ENCODE measurements at regions of chr6 and their contacts with region 1.

Region 1: DNA sequence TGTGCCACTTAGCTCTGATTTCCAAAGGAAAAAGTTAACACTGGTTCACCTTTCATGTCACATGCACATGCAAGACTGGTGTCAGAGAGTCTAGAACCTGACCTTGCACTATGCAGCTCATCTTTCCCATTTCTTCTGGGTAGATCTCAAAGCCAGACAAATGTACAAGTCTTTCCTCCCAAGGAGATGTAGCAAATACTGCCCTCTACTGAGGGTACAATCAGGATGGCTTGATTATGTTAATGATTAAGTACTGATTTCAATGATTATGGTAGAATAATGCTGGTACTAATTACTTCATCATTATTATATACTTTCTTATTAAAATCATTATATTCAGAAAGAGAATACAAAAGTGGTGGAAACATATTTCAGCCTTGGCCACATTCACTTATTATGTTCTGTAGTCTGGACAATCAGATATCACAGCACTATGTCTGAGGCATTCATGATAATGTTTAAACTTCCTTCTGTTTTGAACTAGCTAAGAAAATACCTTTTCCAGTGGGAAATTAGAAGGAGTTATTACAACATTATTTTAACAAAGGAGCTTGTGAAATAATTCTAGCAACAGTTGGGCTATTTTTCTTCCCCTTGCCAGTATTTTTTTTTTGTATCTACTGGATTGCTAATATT is 68.5 kb upstream of the FOXO3 start:
- DNase-seq: no peak
- ATAC-seq: peak; percentile 64
- H3K4me3 ChIP-seq: no peak overlapping the region
- H3K27ac ChIP-seq: no peak overlapping the region
- H3K4me1 ChIP-seq: no peaks in the 10 kb centered on the region
- H3K27me3 ChIP-seq: no peaks in the 10 kb centered on the region
- CTCF ChIP-seq: peak; percentile 45 to 72 (median 56); a peak in 5 of 6 replicates
- EP300 ChIP-seq: no peak
- POLR2A ChIP-seq: no peak
- RAD21 ChIP-seq: peak; percentile 77

Region 2: DNA sequence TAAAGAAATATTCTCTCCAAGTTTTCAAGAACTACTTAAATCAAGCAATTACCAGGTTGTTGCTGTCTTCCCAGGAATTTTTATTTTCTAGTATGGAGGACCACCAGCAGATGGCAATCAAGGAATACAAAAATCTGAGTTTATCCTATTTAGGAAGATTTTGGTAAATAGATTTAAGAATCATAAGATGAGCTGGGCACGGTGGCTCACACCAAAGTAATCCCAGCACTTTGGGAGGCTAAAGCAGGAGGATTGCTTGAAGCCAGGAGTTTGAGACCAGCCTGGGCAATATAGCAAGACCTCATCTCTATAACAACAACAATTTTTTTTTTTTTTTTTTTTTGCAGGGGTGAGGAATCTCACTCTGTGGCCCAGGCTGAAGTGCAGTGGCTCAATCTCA is 515.0 kb before region 1 on chr6:
- CTCF ChIA-PET with region 1: interaction called, 22 read pairs
- POLR2A ChIA-PET with region 1: no interaction called
- RAD21 ChIA-PET with region 1: interaction called, 3 read pairs
- SMC1A ChIA-PET with region 1: interaction called, 6 read pairs
- in situ Hi-C with region 1: no loop called
- intact Hi-C with region 1: no loop called
- DNase-seq: no peak
- ATAC-seq: no peak
- H3K4me3 ChIP-seq: no peak overlapping the region
- H3K27ac ChIP-seq: no peak overlapping the region
- H3K4me1 ChIP-seq: no peaks in the 10 kb centered on the region
- H3K27me3 ChIP-seq: no peaks in the 10 kb centered on the region; a peak in 1 of 4 replicates
- CTCF ChIP-seq: peak in 1 of 3 experiments; percentile 38; a peak in 2 of 6 replicates
- EP300 ChIP-seq: no peak
- POLR2A ChIP-seq: no peak
- RAD21 ChIP-seq: peak; percentile 35

Region 3: DNA sequence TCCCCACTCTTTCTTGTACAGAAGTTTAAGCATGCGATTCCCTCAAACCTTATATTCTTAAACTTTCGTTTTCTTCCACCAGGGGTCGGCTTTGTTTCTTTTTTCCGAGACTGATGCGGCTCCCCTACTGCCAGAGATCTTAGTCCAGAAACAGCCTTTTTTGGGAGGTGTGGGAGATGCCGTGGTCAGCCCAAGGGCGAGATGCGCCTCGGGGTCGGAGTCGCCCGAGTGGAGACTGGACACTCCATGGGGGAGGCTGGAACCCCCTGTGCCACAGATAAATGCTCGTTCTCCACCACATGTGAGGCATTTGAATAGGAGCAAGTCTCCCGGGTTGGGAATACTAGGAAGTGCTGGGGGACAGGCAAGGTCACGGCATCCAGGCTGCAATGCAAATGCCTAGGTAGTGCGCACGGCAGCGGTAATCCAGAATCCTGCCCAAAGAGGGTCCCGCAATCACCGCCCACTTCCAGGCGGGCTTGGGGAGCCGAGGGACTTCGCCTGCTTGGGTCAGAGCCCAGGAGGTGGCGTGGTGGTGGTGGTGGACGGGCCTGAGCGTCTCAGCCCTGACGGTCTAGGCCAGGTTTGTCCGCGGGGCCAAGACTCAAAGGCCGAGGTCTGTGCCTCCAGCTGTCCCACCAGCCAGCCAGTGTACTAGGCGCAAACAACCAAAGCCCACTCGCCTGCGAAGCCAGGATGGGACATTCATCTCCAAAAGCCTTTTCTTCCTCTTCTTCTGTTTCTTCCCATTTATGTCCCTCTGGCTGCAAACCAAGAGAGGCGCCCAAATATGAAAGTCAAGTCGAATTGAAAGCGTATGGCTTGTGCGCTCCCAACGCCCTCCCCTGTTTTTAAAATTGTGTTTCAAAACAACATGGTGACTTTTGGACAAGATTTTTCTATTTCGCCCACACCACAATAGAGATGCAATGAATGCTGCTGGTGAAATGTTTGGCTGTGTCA is 378.4 kb before region 1 on chr6:
- CTCF ChIA-PET with region 1: interaction called, 33 read pairs
- POLR2A ChIA-PET with region 1: no interaction called
- RAD21 ChIA-PET with region 1: interaction called, 11 read pairs
- SMC1A ChIA-PET with region 1: interaction called, 6 read pairs
- in situ Hi-C with region 1: loop called (anchors 5 kb)
- intact Hi-C with region 1: loop called (anchors 1 kb)
- DNase-seq: no peak
- ATAC-seq: peak; percentile 13; the same call in 1 of the 3 replicates
- H3K4me3 ChIP-seq: no peak overlapping the region
- H3K27ac ChIP-seq: no peak overlapping the region
- H3K4me1 ChIP-seq: peaks cover 4% of the 10 kb centered on the region; the same call in 1 of the 2 replicates
- H3K27me3 ChIP-seq: peaks cover 18 to 44% of the 10 kb centered on the region in 2 experiments
- CTCF ChIP-seq: peak; percentile 8 to 53 (median 20); a peak in 3 of 6 replicates
- EP300 ChIP-seq: no peak
- POLR2A ChIP-seq: no peak
- RAD21 ChIP-seq: peak; percentile 78

Region 4: GRCh38 chr6:108250240-108250866 is 241.9 kb before region 1 on chr6:
- CTCF ChIA-PET with region 1: interaction called, 76 read pairs
- POLR2A ChIA-PET with region 1: no interaction called
- RAD21 ChIA-PET with region 1: interaction called, 28 read pairs
- SMC1A ChIA-PET with region 1: interaction called, 28 read pairs
- in situ Hi-C with region 1: loop called (anchors 5 kb)
- intact Hi-C with region 1: loop called (anchors 5 kb)
- DNase-seq: no peak
- ATAC-seq: peak; percentile 91
- H3K4me3 ChIP-seq: no peak overlapping the region
- H3K27ac ChIP-seq: no peak overlapping the region
- H3K4me1 ChIP-seq: no peaks in the 10 kb centered on the region
- H3K27me3 ChIP-seq: no peaks in the 10 kb centered on the region
- CTCF ChIP-seq: peak; percentile 34 to 56 (median 54); a peak in 5 of 6 replicates
- EP300 ChIP-seq: no peak
- POLR2A ChIP-seq: no peak
- RAD21 ChIP-seq: peak; percentile 48

Region 5: DNA sequence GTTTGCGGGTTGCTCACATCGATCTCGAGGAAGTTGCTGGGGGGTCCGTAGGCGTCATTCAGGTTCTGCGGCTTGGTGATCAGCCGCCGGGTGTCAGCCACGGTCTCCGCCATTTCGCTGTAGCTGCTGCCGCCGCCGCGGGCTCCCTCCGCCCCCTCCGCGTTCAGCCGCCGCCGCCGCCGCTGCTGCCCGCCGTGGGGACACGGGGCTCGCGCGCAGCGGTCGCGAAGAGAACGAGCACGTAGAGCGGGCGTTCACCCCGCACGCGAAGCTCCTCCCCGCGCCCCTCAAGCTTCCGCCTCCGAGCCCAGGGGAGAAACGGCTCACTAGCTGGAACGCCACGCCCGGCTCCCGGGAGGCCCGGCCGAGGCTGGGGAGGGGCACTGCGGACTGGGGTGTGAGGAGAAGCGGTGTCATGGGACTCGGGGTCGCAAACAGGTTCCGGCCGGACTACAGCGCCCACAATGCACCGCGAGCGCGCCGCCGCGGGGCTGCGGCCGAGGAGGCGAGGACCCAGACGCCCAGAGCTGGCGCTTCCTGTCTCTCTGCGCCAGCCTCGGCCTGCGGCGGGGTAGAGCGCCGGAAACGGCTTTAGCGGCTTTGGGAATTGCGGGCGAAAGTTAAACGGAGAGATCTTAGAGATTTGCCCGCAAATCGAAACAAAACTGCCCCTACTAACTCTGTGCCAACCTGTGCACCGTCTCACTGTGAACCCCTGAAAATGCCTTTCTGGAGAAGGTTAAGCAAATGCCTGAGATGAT is 231.3 kb before region 1 on chr6 and contains the start of gene SNX3:
- CTCF ChIA-PET with region 1: interaction called, 76 read pairs
- POLR2A ChIA-PET with region 1: interaction called, 3 read pairs
- RAD21 ChIA-PET with region 1: interaction called, 7 read pairs
- SMC1A ChIA-PET with region 1: interaction called, 9 read pairs
- in situ Hi-C with region 1: no loop called
- intact Hi-C with region 1: no loop called
- DNase-seq: peak; percentile 91
- ATAC-seq: peak; percentile 93
- H3K4me3 ChIP-seq: peak within 1 kb of the TSS; percentile 94
- H3K27ac ChIP-seq: peak within 1 kb of the TSS; percentile 99
- H3K4me1 ChIP-seq: peaks cover 8% of the 10 kb centered on the region
- H3K27me3 ChIP-seq: no peaks in the 10 kb centered on the region
- CTCF ChIP-seq: 0 out of 6 replicates have a peak, but pooled peaks of 1 of the 3 experiments have one; percentile 11
- EP300 ChIP-seq: peak in 1 of 2 experiments; percentile 38; a peak in 1 of 4 replicates
- POLR2A ChIP-seq: peak; percentile 88
- RAD21 ChIP-seq: 0 out of 2 replicates have a peak, but pooled peaks have one; percentile 5
- polyA plus RNA-seq, gene SNX3: 43.7 to 78.6 TPM

Region 6: DNA sequence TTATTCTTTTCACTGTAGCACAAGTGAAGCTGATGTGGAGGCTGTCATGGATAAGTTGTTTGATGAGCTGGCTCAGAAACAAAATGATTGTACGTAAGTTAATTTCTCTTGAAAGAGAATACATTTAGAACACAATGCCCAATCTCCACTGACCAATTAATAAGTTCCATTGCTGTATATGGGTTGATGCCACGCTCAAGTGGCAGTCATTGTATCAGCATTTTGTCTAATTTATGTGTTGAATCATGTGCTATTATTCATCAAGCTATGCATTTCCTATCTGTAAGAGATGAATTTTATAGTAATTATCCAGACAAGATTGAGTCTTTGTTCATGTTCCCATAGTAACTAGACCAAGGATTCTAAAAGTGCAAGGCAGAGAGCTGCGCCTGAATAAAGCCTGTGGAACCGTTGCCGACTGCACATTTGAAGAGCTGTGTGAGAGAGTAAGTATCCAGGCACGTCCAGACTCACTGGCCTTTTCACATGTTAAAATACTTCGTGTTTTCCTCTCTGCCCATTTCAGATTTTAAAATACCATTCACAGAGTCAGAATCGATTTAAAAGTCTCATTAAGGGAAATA is 15.3 kb before region 1 on chr6:
- CTCF ChIA-PET with region 1: interaction called, 16 read pairs
- POLR2A ChIA-PET with region 1: no interaction called
- RAD21 ChIA-PET with region 1: interaction called, 7 read pairs
- SMC1A ChIA-PET with region 1: interaction called, 5 read pairs
- in situ Hi-C with region 1: no loop called
- intact Hi-C with region 1: no loop called
- DNase-seq: no peak
- ATAC-seq: no peak
- H3K4me3 ChIP-seq: no peak overlapping the region
- H3K27ac ChIP-seq: no peak overlapping the region
- H3K4me1 ChIP-seq: no peaks in the 10 kb centered on the region
- H3K27me3 ChIP-seq: no peaks in the 10 kb centered on the region
- CTCF ChIP-seq: no peak
- EP300 ChIP-seq: no peak
- POLR2A ChIP-seq: no peak
- RAD21 ChIP-seq: no peak

Region 7: DNA sequence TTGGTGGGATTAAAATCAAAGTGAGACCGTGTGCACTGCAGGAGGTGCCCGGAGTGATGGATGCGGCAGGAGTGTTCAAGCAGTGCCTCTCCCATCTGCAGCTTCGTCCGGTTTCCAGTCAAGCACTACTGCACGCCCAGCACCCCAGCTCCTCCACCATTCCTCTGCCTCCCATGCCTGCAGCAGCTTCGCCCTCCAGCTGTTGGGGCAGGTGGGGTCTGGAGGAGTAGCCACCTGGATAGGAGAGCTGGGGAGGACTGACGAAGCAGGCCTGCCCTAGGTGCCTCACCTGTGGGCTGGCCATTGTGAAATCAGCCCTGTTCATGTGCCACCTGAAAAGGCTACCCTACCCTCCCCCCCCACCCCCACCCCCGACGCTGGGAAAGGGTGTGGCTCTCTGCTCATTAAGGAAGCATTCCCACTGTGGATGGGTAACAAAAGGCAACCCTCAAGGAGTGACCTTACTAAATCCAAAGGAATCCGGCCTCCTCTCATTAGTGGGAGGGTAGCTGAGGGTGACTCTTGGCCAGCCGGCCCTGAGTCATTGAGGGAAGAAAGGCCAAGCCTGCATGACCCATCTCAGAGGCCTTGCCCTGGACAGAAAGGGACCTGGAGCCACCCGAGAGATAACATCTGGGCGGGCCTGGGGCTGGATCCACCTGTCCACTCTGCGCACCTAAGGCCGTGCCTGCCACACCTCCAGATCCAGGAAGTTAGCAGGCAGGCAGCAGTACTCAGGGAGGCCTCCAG is 240.1 kb after region 1 on chr6:
- CTCF ChIA-PET with region 1: no interaction called
- POLR2A ChIA-PET with region 1: no interaction called
- RAD21 ChIA-PET with region 1: no interaction called
- SMC1A ChIA-PET with region 1: no interaction called
- in situ Hi-C with region 1: no loop called
- intact Hi-C with region 1: no loop called
- DNase-seq: no peak
- ATAC-seq: no peak
- H3K4me3 ChIP-seq: no peak overlapping the region
- H3K27ac ChIP-seq: no peak overlapping the region
- H3K4me1 ChIP-seq: no peaks in the 10 kb centered on the region
- H3K27me3 ChIP-seq: peaks cover 3 to 7% of the 10 kb centered on the region in 2 experiments; a peak in 2 of 4 replicates
- CTCF ChIP-seq: no peak
- EP300 ChIP-seq: no peak
- POLR2A ChIP-seq: no peak
- RAD21 ChIP-seq: no peak

Measured in GM12878 (cell line).